Dorsolateral prefrontal cortex (tissue), 120 donors: ENCODE measurements at regions of chr15 and their contacts with region 1.

Region 1: GRCh38 chr15:69893863-69894262 is 203.9 kb downstream of the TLE3 start:
- DNase-seq: peak; percentile 5 to 83 (median 74)
- H3K4me3 ChIP-seq: no peak overlapping the region
- H3K27ac ChIP-seq: peak overlapping the region in 2 of 59 donors; percentile 24 to 37
- H3K27me3 ChIP-seq: peaks cover 0 to 5% (median 0%) of the 10 kb centered on the region in 45 donors
- CTCF ChIP-seq: peak in 5 of 56 donors; percentile 4 to 40 (median 24)

Region 2: DNA sequence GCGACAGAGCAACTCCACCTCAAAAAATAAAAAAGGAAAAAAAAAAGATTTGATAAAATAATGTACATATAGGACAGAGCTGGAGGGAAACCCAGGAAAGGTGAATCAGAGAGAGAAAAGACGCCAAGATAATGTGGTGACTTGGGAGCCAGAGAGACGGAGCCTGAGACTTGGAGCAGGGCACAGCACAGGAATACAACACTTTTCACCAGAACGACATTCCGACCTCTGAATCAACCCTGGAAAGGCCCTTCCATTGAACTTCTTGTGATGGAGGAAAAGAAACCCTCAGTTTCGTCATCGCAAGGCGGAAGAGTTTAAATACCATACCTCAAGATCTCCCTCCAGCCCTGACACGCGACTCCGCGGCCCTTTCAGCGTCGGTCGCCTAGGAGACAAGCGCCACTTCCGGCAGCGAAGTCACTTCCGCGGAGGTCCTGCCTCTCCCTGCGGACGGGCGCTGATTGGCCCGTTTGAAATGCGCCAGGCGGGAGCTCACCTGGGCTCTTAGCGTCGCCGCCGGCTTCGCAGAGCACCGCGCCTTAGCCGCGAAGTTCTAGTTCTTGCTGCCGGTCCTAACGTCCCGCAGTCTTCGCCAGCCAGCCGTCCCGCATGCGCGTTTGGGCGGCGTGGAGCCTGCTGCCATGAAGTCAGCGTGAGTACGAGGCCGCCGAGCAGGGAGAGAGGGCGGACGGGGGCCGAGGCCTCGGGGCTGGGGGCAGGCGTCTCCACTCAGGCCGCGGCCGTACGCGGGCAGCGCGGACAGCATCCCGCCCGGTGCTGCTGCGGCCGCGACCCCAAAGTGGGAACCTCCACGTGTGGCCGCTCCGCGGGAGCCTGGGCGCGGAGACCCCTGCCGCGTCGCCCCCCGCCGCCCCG is 479.8 kb before region 1 on chr15 and contains the start of gene KIF23:
- intact Hi-C with region 1: no loop called
- DNase-seq: peak; percentile 68 to 92 (median 88)
- H3K4me3 ChIP-seq: peak within 1 kb of the TSS; percentile 47 to 100 (median 80)
- H3K27ac ChIP-seq: peak within 1 kb of the TSS in 3 of 59 donors; percentile 9 to 36 (median 31)
- H3K27me3 ChIP-seq: peaks cover 0 to 3% (median 0%) of the 10 kb centered on the region in 45 donors
- CTCF ChIP-seq: peak in 5 of 56 donors; percentile 2 to 22 (median 17)
- total RNA-seq, gene KIF23: 0.22 to 3.1 (median 1.0) TPM in 118 of 120 experiments, not detected in the others

Region 3: DNA sequence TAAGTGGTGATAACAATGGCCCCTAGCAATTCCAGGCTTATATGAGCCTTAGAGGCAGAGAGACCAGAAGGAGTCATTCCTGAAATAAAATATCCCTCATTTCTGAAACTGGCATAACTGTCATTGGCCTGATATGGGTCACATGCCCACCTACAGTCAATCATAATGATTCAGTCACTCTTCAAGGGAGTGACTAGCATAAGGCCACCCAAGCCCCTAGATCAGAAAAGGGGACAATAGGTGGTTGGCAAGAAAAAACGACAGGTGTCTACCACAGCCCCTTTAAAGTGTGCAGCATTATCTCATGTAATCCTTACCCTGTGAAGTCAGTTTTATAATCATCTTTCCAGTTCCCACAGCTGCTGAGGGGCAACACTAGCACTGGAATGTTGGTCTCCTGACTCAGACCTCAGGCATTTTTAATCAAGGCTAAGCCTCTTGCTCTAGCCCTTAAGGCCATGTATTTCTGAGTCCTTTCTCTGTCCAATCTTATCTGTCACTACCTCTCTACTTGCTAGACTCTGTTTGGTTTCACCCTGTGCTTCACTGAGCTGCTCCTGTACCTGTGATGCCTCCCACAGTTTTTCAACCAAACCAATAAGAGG is 32.1 kb after region 1 on chr15:
- intact Hi-C with region 1: no loop called
- DNase-seq: no peak
- H3K4me3 ChIP-seq: no peak overlapping the region
- H3K27ac ChIP-seq: no peak overlapping the region
- H3K27me3 ChIP-seq: peaks cover 0 to 6% (median 0%) of the 10 kb centered on the region in 45 donors
- CTCF ChIP-seq: no peak

Region 4: GRCh38 chr15:70111203-70112073 is 217.6 kb after region 1 on chr15:
- intact Hi-C with region 1: loop called in 1 of 2 experiments (anchors 2 kb)
- DNase-seq: peak in 7 of 10 donors; percentile 63 to 78 (median 75)
- H3K4me3 ChIP-seq: peak overlapping the region in 39 of 59 donors; percentile 1 to 47 (median 18)
- H3K27ac ChIP-seq: peak overlapping the region in 56 of 59 donors; percentile 48 to 90 (median 76)
- H3K27me3 ChIP-seq: peaks cover 0 to 2% (median 0%) of the 10 kb centered on the region in 45 donors
- CTCF ChIP-seq: peak in 3 of 56 donors; percentile 4 to 16 (median 12)